ENCODE measurements at regions of chr11 and their contacts with region 1.

Region 1: DNA sequence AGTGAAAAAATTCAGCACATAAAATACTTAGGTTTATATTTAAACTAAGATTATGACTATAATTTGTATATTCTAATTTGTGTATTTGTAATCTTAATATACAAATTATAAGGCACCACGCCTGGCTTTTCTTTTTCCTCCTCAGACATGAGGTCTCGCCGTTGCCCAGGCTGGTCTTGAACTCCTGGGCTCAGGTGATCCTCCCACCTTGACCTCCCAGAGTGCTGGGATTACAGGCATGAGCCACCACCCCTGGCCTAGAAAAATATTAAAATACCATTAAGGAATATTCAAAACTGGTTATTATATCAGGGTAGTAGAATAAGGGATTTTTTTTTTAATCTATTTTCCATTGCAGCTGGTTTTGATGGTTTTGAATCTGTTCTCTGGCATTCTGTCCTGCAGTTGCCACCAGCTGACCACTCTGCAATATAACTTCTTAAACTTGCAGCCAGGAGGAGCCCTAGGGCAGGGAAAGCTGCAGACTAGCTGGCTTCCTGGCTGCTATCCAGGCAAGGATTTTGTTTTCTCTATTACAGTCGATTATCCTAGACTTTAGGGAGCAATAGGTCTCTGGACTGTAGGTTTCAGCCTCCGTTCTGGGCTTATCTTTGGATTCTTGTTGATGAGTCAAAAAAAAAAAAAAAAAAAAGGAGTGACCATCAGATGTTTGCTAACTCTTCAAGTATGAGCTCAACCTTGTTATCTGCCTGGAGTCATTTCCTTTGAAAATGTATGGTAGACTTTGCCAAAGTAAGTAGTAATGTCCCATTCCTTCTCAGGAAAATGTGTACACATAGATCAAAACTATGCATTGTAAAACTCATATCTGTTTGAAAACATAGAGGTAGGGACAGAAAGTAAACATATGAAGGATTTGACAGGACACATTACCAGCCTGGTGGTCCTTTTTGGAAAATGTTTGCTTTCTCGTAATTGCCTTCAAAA is 13.2 kb downstream of the POLA2 start:
- DNase-seq: peak; percentile 66
- ATAC-seq: peak; percentile 92

Region 2: GRCh38 chr11:65169164-65169641 is 105.8 kb before region 1 on chr11:
- intact Hi-C with region 1: no loop called
- DNase-seq: no peak
- ATAC-seq: no peak

Region 3: DNA sequence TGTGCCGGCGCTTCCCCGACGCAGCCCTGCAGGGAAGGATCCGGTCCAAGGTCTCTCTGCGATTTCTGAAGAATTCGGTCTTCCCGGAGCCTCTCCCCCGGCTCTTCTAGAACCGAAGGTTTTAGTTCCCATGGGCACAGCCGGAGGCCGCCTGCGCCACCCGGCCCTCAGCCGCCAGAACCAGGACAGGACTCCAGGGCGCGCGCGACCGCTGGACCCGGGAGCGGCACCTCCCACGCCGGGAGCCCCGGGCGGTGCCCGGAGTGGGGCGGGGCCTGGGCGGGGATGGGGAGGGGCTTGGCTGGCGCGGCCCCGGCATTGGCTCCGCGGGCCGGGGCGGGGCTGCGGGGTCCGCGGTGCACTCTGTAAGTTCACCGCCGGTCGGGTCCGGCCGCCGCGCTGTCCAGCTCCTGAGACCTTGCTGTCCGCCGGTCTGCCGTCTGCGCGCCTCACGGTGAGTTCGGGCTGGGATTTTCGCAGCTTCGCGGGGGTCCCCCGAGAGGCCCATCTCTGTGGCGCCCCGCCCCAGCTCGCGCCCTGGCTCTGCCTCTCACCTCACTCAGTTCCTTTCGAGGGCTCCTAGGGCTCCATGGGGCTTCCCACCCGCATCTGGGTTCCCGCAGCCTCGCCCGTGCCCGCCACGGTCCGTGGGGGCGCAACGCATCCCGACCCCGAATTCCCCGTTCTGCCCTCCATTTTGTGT is 39.6 kb after region 1 on chr11 and contains the start of gene CDC42EP2:
- intact Hi-C with region 1: loop called (anchors 2 kb)
- DNase-seq: peak; percentile 93
- ATAC-seq: peak; percentile 94
- total RNA-seq, gene CDC42EP2: 14.0 TPM

Measured in Right ventricle myocardium superior (tissue), 1 donor.